KBM-7 (cell line): ENCODE measurements at regions of chrX and their contacts with region 1.

Region 1: DNA sequence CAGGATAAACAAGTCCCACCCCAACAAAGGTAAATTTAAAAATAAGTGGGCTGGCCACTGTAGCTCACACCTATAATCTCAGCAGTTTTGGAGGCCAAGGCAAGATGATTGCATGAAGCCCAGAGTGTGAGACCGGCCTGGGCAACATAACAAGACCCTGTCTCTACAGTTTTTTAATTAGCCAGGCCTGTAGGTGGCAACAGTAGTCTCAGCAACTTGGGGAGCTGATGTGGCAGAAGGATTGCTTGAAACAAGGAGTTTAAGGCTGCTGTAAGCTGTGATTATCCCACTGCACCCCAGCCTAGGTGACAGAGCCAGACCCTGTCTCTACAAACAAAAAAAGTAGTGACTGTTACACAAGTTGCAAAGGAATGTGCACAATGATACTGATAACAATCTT is 74.6 kb upstream of the FAAH2 start:
- DNase-seq: no peak

Region 2: DNA sequence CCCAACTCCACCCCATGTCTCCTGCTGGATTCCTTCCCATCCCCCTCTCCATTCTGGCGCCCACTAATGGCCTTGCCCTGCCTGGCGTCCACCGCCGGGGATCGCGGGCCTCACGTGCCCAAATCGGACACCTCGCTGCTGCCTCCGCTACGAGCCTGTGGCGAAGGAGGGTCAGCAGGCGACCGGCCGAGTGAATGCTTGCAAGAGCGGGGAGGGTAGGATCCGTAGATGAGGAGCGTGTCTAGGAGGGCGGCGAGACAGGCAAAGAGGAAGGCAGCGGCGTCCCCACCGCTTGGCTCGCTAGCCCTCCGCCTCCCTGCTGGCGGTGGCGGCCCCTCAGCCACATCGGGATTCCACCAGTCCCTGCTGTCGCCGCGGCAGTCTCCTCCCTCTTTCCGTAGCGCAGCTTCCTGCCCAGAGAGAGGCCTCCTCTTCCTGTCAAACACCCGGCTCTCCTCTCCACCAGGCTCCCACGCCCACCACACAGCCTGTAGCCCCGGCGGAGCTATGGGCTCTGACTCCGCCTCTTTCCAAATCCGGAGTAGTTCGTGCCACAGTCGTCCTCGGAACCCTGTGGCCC is 90.7 kb before region 1 on chrX and contains the start of gene SPIN2B:
- in situ Hi-C with region 1: loop called (anchors 25 kb)
- DNase-seq: peak; percentile 98

Region 3: GRCh38 chrX:57573754-57574153 is 361.8 kb after region 1 on chrX:
- in situ Hi-C with region 1: no loop called
- DNase-seq: peak; percentile 79